H1 (cell line): ENCODE measurements at regions of chr15 and their contacts with region 1.

Region 1: GRCh38 chr15:66598095-66598815 is 32.5 kb upstream of the LCTL start:
- DNase-seq: no peak
- H3K4me3 ChIP-seq: no peak overlapping the region
- H3K27ac ChIP-seq: no peak overlapping the region
- H3K4me1 ChIP-seq: no peaks in the 10 kb centered on the region
- H3K27me3 ChIP-seq: no peaks in the 10 kb centered on the region
- CTCF ChIP-seq: no peak
- EP300 ChIP-seq: no peak
- POLR2A ChIP-seq: no peak
- RAD21 ChIP-seq: no peak

Region 2: DNA sequence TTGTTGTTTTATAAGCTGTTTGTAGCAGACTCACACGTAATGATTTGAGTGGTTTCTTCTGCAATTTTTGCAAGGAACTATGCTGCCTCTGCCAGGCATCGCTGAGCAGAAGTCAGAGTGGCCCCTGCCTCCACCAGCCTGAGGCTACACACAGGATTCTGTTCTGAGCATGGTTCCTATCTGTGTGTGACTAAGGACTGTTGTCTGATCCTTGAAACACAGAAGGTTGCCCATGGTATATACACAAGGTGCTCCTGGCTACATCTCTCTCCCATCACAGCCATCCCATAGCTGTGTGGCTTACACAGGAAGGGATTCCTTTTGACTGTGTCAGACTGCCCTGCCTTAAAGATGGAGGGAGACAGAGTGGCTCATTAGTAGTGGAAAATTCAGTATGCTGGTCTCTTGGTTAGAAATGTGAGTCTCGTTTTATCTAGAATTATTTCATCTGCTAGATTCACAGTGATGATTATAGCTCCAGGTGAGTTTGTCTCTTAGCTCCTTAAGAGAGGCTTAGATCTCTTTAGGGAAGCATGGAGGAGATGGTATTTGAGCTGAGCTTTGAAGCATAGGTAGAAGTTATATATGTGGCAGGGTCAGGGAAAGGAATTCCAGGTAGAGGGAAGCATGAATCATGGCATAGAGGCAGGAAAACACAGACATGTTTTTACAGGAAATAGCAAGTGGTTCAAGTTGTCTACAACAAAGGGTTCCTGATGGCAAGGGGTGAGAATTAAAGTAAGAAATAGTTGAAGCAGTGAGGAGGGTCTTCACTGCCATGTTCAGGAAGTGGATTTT is 138.2 kb before region 1 on chr15:
- CTCF ChIA-PET with region 1: no interaction called
- POLR2A ChIA-PET with region 1: no interaction called
- DNase-seq: no peak
- H3K4me3 ChIP-seq: no peak overlapping the region
- H3K27ac ChIP-seq: no peak overlapping the region
- H3K4me1 ChIP-seq: peaks cover 2 to 10% (median 5%) of the 10 kb centered on the region in 4 experiments; a peak in 6 of 7 replicates
- H3K27me3 ChIP-seq: no peaks in the 10 kb centered on the region
- CTCF ChIP-seq: no peak
- EP300 ChIP-seq: no peak
- POLR2A ChIP-seq: no peak
- RAD21 ChIP-seq: no peak

Region 3: GRCh38 chr15:66514586-66514985 is 83.7 kb before region 1 on chr15:
- CTCF ChIA-PET with region 1: no interaction called
- POLR2A ChIA-PET with region 1: no interaction called
- DNase-seq: no peak
- H3K4me3 ChIP-seq: no peak overlapping the region
- H3K27ac ChIP-seq: no peak overlapping the region
- H3K4me1 ChIP-seq: no peaks in the 10 kb centered on the region
- H3K27me3 ChIP-seq: no peaks in the 10 kb centered on the region
- CTCF ChIP-seq: no peak
- EP300 ChIP-seq: no peak
- POLR2A ChIP-seq: no peak
- RAD21 ChIP-seq: no peak

Region 4: GRCh38 chr15:66611257-66612053 is 13.2 kb after region 1 on chr15:
- CTCF ChIA-PET with region 1: interaction called, 12 read pairs
- POLR2A ChIA-PET with region 1: no interaction called
- DNase-seq: no peak
- H3K4me3 ChIP-seq: no peak overlapping the region
- H3K27ac ChIP-seq: no peak overlapping the region
- H3K4me1 ChIP-seq: no peaks in the 10 kb centered on the region; a peak in 1 of 7 replicates
- H3K27me3 ChIP-seq: no peaks in the 10 kb centered on the region
- CTCF ChIP-seq: no peak
- EP300 ChIP-seq: no peak
- POLR2A ChIP-seq: no peak
- RAD21 ChIP-seq: no peak